AG04449 (cell line): ENCODE measurements at regions of chr22 and their contacts with region 1.

Region 1: GRCh38 chr22:40898850-40899357 is 37.0 kb upstream of the DNAJB7 start:
- DNase-seq: no peak
- H3K4me3 ChIP-seq: no peak overlapping the region
- CTCF ChIP-seq: peak; percentile 40

Region 2: DNA sequence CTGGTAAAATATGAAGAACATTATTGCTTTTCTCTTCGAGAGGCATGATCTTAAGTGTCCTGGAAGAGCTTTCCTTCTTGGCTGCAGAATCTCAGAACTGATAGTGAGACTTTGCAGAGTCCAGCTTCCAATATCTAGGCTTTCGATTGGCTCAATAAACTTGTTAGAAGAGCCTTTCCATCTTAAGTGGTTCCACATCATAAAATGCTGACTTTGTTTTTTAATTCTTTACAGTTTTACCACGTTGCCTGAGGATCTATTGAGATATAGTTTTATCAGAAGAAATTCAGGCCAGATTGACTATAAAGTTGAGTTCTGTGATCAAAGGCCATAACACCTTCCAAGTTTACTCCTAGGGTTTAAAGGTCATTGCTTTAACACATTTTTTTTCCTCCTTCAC is 21.4 kb before region 1 on chr22:
- CTCF ChIA-PET with region 1: interaction called, 12 read pairs
- POLR2A ChIA-PET with region 1: no interaction called
- DNase-seq: no peak
- H3K4me3 ChIP-seq: no peak overlapping the region
- CTCF ChIP-seq: no peak

Region 3: DNA sequence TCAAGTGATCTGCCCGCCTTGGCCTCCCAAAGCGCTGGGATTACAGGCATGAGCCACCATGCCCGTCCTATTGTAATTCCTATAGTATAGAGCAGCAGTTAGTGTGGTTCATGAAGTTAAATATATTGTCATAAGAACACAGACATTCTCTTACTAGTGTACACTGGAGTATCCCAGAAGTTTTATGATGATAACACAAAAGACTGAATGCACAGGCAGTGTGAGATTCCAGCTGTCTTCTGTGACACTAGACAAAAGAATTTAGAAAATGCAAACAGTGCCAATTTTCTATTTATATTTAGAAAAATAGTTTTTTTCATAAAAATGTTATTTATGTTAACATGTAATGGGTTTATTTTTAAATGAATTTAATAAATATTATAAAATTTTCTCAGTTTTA is 12.9 kb after region 1 on chr22:
- CTCF ChIA-PET with region 1: interaction called, 29 read pairs
- POLR2A ChIA-PET with region 1: no interaction called
- DNase-seq: no peak
- H3K4me3 ChIP-seq: no peak overlapping the region
- CTCF ChIP-seq: no peak